ENCODE measurements at regions of chrX and their contacts with region 1.

Region 1: GRCh38 chrX:101759000-101759399 is 99.3 kb upstream of the ARMCX2 start:
- DNase-seq: peak; percentile 1
- H3K4me3 Mint-ChIP-seq: no peak overlapping the region
- H3K27ac Mint-ChIP-seq: no peak overlapping the region
- H3K4me1 Mint-ChIP-seq: no peaks in the 10 kb centered on the region
- H3K27me3 Mint-ChIP-seq: peaks cover 7% of the 10 kb centered on the region

Region 2: DNA sequence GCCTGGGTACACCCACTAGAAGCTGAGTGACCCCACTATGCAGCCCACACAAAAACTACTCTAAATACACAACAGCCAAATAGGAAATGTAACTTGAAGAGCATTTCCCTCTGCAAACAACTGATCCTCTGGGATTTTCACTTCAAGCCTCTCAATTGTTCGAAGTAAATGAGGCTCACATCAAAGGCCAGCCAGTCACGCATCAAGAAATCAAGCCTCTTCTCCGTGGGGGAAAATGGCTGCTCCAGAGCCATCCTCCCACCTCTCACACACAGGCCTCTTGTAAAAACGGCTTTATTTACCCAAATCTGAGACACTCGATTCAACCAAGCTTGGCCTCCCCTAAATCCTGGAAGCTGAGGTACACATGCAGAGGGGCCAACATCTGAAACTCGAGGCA is 1363.2 kb before region 1 on chrX:
- intact Hi-C with region 1: no loop called
- DNase-seq: no peak
- H3K4me3 Mint-ChIP-seq: no peak overlapping the region
- H3K27ac Mint-ChIP-seq: no peak overlapping the region
- H3K4me1 Mint-ChIP-seq: no peaks in the 10 kb centered on the region
- H3K27me3 Mint-ChIP-seq: no peaks in the 10 kb centered on the region

Region 3: DNA sequence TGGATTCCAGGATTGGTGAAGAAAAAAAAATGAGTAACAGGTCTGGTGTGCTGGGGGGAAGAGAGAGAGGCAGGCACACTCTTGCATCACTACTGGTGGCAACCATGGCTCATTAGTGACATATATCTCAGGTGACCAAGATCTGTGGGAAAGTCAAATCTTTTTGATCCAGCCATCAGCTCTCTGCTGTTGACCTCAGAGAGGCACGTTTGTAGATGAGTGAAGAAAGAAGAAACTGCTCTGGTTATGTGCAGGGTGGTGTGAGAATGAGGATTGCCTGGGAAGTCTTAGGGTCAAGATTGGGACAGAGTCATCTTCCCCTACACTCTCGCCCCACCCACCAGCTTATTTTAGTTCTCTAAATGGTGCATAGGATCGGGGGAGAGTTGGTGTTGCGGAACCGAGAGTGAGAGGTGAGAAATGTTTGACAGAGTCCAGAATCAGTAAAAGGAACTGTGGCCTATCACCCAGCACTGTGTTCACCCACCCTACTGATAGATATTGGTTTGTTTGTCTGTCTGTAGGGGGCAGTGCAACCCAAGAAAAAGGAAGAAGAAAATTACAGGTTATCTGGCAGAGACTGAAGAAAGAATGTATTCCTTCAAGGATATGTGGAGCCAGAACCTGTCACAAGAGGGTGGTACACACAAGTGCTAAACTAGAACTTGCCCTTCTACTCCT is 163.1 kb before region 1 on chrX:
- intact Hi-C with region 1: loop called (anchors 5 kb)
- DNase-seq: peak; percentile 8
- H3K4me3 Mint-ChIP-seq: no peak overlapping the region
- H3K27ac Mint-ChIP-seq: no peak overlapping the region
- H3K4me1 Mint-ChIP-seq: no peaks in the 10 kb centered on the region
- H3K27me3 Mint-ChIP-seq: peaks cover 2% of the 10 kb centered on the region

Region 4: DNA sequence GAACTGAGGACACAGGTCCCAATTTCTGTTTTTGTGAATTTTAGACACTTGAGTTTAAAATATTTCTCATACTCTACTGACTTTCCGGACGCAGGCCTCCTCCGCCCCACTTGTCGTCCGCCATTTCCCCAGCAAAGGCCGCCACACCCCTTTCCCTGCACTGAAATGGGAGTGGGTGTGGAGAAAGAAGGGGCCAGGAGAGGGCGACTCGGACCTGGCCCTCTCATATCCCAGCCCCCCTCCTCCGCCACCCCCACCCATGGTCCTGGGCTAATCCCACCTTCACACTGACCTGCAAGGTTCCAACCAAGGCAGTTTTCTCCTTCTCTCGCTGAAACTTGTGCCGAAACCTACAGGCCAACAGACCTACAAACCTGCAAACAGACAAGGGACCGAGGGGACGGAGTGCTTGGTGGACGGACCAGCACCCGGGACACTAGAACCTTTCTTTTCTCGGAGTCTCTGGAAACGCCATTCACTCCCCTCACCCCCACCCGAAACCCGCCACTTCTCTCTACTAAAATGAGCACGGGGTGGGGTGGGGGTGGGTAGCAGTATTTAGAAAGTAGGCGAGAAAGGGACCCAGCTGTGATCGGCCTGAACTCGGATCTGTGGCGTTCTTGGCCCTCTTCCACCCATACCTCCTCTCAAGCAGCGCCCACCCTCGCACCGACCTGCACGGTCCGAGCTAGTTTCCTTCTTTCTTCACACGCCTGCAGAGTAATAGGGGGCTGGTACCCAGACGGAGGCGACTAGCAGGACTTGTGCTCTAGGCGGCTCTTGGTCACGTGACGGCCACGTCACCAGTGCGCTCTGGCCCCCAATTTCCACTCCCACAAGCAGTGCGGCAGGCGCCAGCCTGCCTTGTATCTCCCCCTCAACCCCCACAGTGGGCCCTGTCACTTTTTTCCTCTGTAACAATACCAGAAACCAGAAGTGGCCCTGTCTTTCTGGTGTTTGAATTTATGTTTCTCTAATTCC is 141.5 kb before region 1 on chrX and contains the start of gene ARMCX6:
- intact Hi-C with region 1: loop called (anchors 5 kb)
- DNase-seq: peak; percentile 68
- H3K4me3 Mint-ChIP-seq: peak within 1 kb of the TSS; percentile 93
- H3K27ac Mint-ChIP-seq: peak within 1 kb of the TSS; percentile 92
- H3K4me1 Mint-ChIP-seq: peaks cover 46% of the 10 kb centered on the region
- H3K27me3 Mint-ChIP-seq: no peaks in the 10 kb centered on the region
- total RNA-seq, gene ARMCX6: 79.3 and 83.5 TPM in 2 replicates

Region 5: GRCh38 chrX:101799387-101799786 is 40.4 kb after region 1 on chrX:
- intact Hi-C with region 1: loop called (anchors 2 kb)
- DNase-seq: peak; percentile 72
- H3K4me3 Mint-ChIP-seq: peak overlapping the region; percentile 70
- H3K27ac Mint-ChIP-seq: no peak overlapping the region
- H3K4me1 Mint-ChIP-seq: peaks cover 4% of the 10 kb centered on the region
- H3K27me3 Mint-ChIP-seq: peaks cover 4% of the 10 kb centered on the region

Region 6: DNA sequence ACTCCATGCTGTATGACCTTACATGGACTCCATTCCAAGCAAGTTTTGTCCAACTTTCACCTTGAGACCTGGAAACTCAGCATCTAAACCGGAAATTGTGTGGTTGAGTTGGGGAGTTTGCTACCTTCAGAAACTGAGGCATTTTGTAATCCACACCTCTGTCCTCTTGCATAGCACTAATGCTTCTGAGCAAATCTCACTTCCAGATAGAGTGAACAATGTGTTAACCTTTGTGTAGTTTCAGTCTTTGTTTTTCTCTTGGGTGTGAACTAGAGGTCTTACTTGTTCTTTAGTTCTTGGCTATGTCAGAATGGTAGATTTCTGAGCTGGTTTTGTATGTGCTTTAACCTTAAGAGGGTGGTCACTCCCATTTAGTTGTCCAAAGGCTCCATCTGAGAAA is 318.4 kb after region 1 on chrX:
- intact Hi-C with region 1: no loop called
- DNase-seq: no peak
- H3K4me3 Mint-ChIP-seq: no peak overlapping the region
- H3K27ac Mint-ChIP-seq: no peak overlapping the region
- H3K4me1 Mint-ChIP-seq: no peaks in the 10 kb centered on the region
- H3K27me3 Mint-ChIP-seq: no peaks in the 10 kb centered on the region